Activated CD4-positive, alpha-beta T cell treated with anti-CD3 and anti-CD28 coated beads, Interleukin-2, amount 10 ng/mL, durations not matched to agents 24 days and 14 days (primary cell): ENCODE measurements at regions of chr13 and their contacts with region 1.

Region 1: DNA sequence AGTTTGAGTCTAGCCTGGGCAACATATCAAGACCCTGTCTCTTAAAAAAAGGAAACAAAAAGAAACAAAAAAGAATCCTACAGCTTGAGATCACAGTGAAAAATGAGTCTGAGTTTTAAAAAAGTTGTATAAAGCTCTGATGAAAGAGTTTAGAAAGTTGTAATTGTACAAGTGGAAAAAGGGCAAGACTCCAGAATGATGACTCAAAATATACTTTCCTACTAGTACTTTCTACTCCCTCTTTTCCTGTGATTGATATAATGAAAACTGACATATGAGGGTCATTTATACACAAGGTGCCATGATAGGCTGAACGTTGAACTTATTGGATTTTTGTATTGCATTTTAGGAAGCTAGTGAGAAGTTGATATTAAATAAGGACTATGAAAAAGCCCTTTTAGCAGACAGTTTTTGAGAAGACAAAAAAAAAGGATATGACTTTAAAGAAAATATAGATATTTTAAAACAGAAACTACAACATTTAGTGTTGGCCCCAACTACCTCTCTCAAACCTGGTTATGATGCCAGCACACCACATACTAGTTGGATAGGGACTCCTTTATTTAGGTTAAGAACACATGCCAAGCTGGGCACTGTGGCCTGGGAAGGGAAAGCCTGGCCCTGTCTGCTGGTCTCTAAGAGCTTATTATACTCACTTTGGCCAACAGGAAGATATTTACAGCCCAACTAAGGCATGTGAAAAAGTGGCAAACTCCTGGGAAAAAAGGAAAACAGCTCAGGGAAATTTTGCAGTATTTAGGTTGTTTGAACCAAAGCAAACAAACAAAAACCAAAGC is 116.6 kb downstream of the KL start:
- DNase-seq: no peak
- H3K4me3 Mint-ChIP-seq: no peak overlapping the region
- H3K27ac Mint-ChIP-seq: peak overlapping the region; percentile 89
- H3K4me1 Mint-ChIP-seq: peaks cover 8% of the 10 kb centered on the region
- H3K27me3 Mint-ChIP-seq: no peaks in the 10 kb centered on the region

Region 2: DNA sequence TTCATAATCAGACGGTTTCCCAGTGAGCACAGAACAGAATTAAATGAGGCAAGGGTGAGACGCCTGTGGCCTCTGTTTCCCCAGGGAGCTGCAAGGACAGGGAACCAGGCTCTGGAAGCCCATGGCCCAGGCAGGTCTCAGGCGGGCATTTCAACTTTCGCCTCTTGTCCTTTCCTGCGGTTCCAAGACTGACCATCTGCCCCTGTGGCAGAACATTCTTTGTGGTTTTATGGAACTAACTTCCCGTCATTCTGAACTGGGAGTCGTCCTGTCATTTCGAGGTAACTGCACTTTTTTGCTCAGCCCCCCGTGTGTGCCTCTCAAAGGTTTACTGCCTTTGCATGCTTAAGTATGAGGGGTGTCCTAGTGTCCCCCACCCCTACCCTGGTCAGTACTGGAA is 45.8 kb before region 1 on chr13:
- intact Hi-C with region 1: loop called (anchors 5 kb)
- DNase-seq: no peak
- H3K4me3 Mint-ChIP-seq: peak overlapping the region; percentile 66
- H3K27ac Mint-ChIP-seq: peak overlapping the region; percentile 83
- H3K4me1 Mint-ChIP-seq: peaks cover 22% of the 10 kb centered on the region
- H3K27me3 Mint-ChIP-seq: peaks cover 2% of the 10 kb centered on the region